HEK293 (cell line): ENCODE measurements at regions of chr22 and their contacts with region 1.

Region 1: GRCh38 chr22:36194971-36195370 is 6.6 kb downstream of the APOL4 start:
- H3K4me3 ChIP-seq: no peak overlapping the region
- H3K27ac ChIP-seq: no peak overlapping the region
- H3K4me1 ChIP-seq: no peaks in the 10 kb centered on the region
- CTCF ChIP-seq: peak; percentile 73

Region 2: DNA sequence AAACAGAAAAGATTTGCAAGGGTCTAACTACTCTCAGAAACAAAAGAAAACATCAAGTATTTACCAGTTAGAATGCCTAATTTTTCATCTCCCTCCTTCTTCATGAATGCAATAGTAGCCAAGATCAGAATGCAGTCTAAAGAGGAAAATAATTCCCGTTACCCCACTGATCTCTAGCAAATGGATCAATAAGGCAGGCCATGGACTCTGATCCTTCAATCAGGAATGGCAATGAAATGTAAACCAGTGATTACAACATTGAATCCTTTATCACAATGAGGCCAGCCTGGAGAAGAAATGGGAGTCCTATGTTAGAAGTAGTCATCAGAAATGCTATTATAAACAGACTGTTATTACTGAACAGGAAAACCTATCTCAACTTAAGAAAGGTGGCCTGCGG is 370.7 kb before region 1 on chr22:
- CTCF ChIA-PET with region 1: no interaction called
- POLR2A ChIA-PET with region 1: no interaction called
- H3K4me3 ChIP-seq: no peak overlapping the region
- H3K27ac ChIP-seq: no peak overlapping the region
- H3K4me1 ChIP-seq: no peaks in the 10 kb centered on the region
- CTCF ChIP-seq: no peak

Region 3: GRCh38 chr22:35995772-35996171 is 199.2 kb before region 1 on chr22:
- CTCF ChIA-PET with region 1: no interaction called
- POLR2A ChIA-PET with region 1: no interaction called
- H3K4me3 ChIP-seq: no peak overlapping the region
- H3K27ac ChIP-seq: no peak overlapping the region
- H3K4me1 ChIP-seq: peaks cover 9% of the 10 kb centered on the region
- CTCF ChIP-seq: no peak

Region 4: GRCh38 chr22:36221799-36222751 is 27.1 kb after region 1 on chr22:
- CTCF ChIA-PET with region 1: interaction called, 30 read pairs
- POLR2A ChIA-PET with region 1: no interaction called
- H3K4me3 ChIP-seq: no peak overlapping the region
- H3K27ac ChIP-seq: no peak overlapping the region
- H3K4me1 ChIP-seq: no peaks in the 10 kb centered on the region
- CTCF ChIP-seq: peak; percentile 82

Region 5: GRCh38 chr22:36277482-36278291 is 82.7 kb after region 1 on chr22:
- CTCF ChIA-PET with region 1: interaction called, 22 read pairs
- POLR2A ChIA-PET with region 1: interaction called, 6 read pairs
- H3K4me3 ChIP-seq: no peak overlapping the region
- H3K27ac ChIP-seq: no peak overlapping the region; the same call in 1 of the 2 replicates
- H3K4me1 ChIP-seq: no peaks in the 10 kb centered on the region
- CTCF ChIP-seq: peak; percentile 54

Region 6: DNA sequence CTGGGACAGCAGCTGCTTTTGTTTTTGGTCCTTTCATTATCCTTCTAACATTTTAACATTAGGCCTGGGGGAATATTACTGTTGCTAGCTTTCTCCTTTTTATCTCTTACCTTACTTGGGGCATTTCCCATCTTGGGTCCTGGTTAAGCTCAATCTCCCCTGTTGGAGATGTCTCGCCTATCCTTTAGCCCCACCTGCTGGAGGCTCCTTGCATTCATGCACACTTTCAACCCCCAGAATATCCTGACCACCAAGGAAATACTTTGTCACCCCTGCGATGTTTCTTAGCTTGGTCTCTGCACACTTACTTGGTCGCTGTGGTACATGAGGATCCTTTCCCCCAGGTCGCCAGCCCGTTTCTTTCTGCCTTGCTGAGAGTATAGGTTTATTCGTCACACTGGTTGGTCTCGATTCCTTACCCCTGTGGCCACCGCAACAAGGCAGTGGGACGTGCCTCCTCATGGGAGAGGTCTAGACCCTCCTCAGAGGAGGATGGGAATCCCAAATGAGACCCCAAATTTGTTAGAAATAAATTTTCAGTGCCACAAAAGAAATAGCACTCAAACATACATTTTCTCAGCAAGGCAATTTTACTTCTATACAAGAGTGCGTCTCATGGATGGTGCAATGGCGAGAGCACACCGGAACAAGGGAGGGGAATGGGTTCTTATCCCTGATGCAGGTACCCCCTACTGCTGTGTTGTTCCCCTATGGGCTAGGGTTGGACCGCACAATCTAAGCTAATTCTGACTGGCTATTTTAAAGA is 291.8 kb after region 1 on chr22:
- CTCF ChIA-PET with region 1: interaction called, 14 read pairs
- POLR2A ChIA-PET with region 1: no interaction called
- H3K4me3 ChIP-seq: no peak overlapping the region
- H3K27ac ChIP-seq: no peak overlapping the region
- H3K4me1 ChIP-seq: no peaks in the 10 kb centered on the region; the same call in 1 of the 2 replicates
- CTCF ChIP-seq: peak; percentile 79